Thyroid gland (tissue), 4 donors: ENCODE measurements at regions of chr17 and their contacts with region 1.

Region 1: GRCh38 chr17:29568331-29569244 is at the start of gene TP53I13:
- DNase-seq: peak; percentile 92 to 93
- H3K4me3 ChIP-seq: peak within 1 kb of the TSS; percentile 21 to 64 (median 42)
- H3K27ac ChIP-seq: peak within 1 kb of the TSS; percentile 85 to 96 (median 88)
- H3K4me1 ChIP-seq: peaks cover 18 to 48% of the 10 kb centered on the region in 2 donors
- H3K27me3 ChIP-seq: no peaks in the 10 kb centered on the region
- CTCF ChIP-seq: no peak
- POLR2A ChIP-seq: peak in 1 of 2 donors; percentile 86
- total RNA-seq, gene TP53I13: 54.7 to 79.0 (median 57.4) TPM

Region 2: GRCh38 chr17:29389982-29390850 is 178.4 kb before region 1 on chr17 and contains the start of gene TAOK1:
- intact Hi-C with region 1: loop called (anchors 10 kb)
- DNase-seq: peak; percentile 99 to 100
- H3K4me3 ChIP-seq: peak within 1 kb of the TSS; percentile 86 to 98 (median 96)
- H3K27ac ChIP-seq: peak within 1 kb of the TSS; percentile 95 to 98 (median 95)
- H3K4me1 ChIP-seq: peaks cover 8 to 19% of the 10 kb centered on the region in 2 donors
- H3K27me3 ChIP-seq: no peaks in the 10 kb centered on the region
- CTCF ChIP-seq: no peak
- POLR2A ChIP-seq: peak; percentile 76 to 93
- total RNA-seq, gene TAOK1: 62.9 to 87.5 (median 68.8) TPM